ENCODE measurements at regions of chr4 and their contacts with region 1.

Region 1: DNA sequence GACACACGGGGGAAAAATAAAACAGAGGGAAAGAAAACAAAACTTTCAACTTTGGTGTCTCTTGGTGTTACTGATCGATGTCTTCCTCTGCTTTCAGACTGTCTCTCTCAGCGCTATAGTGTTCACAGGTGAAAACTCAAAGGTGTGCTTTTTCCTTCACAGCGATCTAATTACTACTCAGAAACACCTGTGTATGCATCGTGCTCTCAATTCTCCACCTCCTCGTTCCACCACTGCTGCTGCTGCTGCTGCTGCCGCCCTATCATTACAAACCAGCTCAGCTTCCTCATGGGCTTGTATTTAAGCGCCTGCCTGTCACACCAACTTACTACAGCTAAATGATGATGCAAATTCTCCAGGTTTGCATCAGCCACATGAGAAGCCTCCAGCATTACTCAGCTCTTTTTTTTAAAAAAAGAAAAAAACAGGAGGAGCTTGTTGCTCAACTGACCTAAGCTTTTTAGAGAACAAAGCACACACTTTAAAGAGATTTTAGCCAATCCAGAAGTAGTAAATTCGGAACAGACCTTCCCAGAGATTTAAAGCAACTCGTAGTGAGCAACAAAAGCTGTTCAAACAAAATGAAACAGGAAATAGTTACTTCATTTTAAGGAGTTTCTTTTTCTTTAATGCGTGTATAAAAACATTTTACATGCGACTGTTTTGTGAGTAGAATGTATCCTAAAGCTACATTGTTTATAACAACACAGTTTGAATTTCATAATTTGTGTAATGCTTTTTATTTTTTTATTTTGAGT is at the start of gene SLC7A11:
- DNase-seq: peak; percentile 93 to 99 (median 98)
- H3K4me3 ChIP-seq: peak within 1 kb of the TSS; percentile 28 to 66 (median 52)
- H3K4me3 Mint-ChIP-seq: peak within 1 kb of the TSS; percentile 74 to 90
- H3K27ac ChIP-seq: peak within 1 kb of the TSS; percentile 20 to 92
- H3K27ac Mint-ChIP-seq: peak within 1 kb of the TSS; percentile 82 to 95 (median 93)
- H3K4me1 ChIP-seq: peaks cover 7 to 11% of the 10 kb centered on the region in 2 donors
- H3K4me1 Mint-ChIP-seq: peaks cover 11% of the 10 kb centered on the region
- H3K27me3 ChIP-seq: no peaks in the 10 kb centered on the region
- H3K27me3 Mint-ChIP-seq: peaks cover 0 to 2% (median 0%) of the 10 kb centered on the region in 3 donors
- CTCF ChIP-seq: no peak
- polyA plus RNA-seq, gene SLC7A11: 0.02 to 0.07 TPM in 2 of 3 donors, not detected in the other

Region 2: DNA sequence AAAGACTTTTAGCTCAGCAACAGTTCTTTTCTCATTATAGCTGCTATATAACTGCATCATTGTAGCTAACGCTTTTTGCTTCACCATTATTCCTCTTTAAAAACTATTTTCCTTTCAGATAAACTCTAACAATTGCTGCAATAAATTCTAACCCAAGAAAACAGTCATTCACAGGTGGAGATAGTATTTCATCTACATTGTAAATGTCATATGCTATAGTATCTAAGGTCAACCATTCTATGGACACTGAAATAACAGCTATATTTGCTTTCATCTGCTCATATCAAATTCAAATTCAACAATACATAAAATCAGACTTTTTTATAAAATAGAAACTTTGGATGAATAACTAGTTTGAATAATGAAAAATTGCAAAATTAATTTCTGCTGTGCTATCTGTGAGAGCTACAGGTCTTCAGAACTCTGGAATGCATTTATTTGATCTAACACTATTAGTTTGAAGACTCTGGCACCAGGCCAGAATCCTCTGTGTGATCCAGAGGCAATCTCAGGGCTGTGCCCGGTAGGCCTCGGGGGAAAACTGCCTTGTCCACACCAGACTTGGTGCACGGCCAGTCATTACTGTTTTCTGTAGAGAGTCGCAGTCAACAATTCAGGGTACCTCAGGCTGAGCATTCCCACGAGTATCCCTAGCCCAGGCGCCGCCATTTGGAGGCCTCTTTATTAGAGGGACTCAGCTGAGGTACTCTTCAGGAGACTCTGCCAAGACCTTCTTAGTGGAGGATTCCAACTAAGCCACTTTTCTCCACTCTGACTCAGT is 332.5 kb before region 1 on chr4:
- intact Hi-C with region 1: no loop called
- DNase-seq: no peak
- H3K4me3 ChIP-seq: no peak overlapping the region
- H3K4me3 Mint-ChIP-seq: no peak overlapping the region
- H3K27ac ChIP-seq: no peak overlapping the region
- H3K27ac Mint-ChIP-seq: no peak overlapping the region
- H3K4me1 ChIP-seq: no peaks in the 10 kb centered on the region
- H3K4me1 Mint-ChIP-seq: no peaks in the 10 kb centered on the region
- H3K27me3 ChIP-seq: no peaks in the 10 kb centered on the region
- H3K27me3 Mint-ChIP-seq: peaks cover 0 to 2% (median 0%) of the 10 kb centered on the region in 3 donors
- CTCF ChIP-seq: no peak

Region 3: GRCh38 chr4:138190452-138190858 is 51.8 kb before region 1 on chr4:
- intact Hi-C with region 1: loop called (anchors 5 kb)
- DNase-seq: peak; percentile 78 to 85 (median 83)
- H3K4me3 ChIP-seq: peak overlapping the region in 1 of 3 experiments; percentile 18
- H3K4me3 Mint-ChIP-seq: peak overlapping the region in 1 of 2 donors; percentile 47
- H3K27ac ChIP-seq: peak overlapping the region in 1 of 2 donors; percentile 63
- H3K27ac Mint-ChIP-seq: peak overlapping the region; percentile 65 to 93 (median 85)
- H3K4me1 ChIP-seq: peaks cover 25 to 27% of the 10 kb centered on the region in 2 donors
- H3K4me1 Mint-ChIP-seq: peaks cover 29% of the 10 kb centered on the region
- H3K27me3 ChIP-seq: no peaks in the 10 kb centered on the region
- H3K27me3 Mint-ChIP-seq: no peaks in the 10 kb centered on the region
- CTCF ChIP-seq: no peak

Region 4: DNA sequence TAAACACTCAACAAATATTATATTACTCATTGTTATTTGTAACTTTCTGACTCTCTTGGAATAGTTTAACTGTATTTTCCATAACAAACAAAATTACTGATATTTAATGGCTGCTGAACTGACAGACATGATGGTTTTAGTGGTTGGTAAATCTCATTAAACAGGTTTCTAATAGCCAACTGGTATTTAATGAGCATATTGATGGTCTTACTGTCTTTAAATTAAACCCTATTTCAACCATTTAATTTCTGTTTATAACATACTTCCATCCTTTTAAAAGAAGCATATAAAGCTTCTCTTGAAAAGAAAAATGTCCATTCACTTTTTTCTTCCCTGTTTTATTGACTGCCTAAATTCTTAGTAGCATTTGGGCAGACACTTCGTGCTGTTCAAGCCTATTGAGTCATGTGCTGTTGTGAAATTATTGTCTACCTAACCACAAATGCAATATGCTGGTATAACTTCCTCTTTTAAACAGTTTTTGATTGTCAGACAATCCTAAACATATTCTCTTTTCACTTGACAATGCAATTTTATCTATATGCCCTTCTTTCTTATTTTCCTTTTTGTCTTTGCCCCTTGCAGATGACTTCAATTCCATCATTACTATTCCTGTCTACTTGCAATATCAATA is 163.8 kb after region 1 on chr4:
- intact Hi-C with region 1: loop called (anchors 5 to 10 kb)
- DNase-seq: peak; percentile 89 to 99 (median 96)
- H3K4me3 ChIP-seq: peak overlapping the region in 1 of 3 experiments; percentile 55
- H3K4me3 Mint-ChIP-seq: peak overlapping the region in 1 of 2 donors; percentile 85
- H3K27ac ChIP-seq: peak overlapping the region; percentile 21 to 91
- H3K27ac Mint-ChIP-seq: peak overlapping the region; percentile 83 to 96 (median 91)
- H3K4me1 ChIP-seq: peaks cover 34 to 37% of the 10 kb centered on the region in 2 donors
- H3K4me1 Mint-ChIP-seq: peaks cover 43% of the 10 kb centered on the region
- H3K27me3 ChIP-seq: no peaks in the 10 kb centered on the region
- H3K27me3 Mint-ChIP-seq: no peaks in the 10 kb centered on the region
- CTCF ChIP-seq: no peak

Measured in CD14-positive monocyte (primary cell).